RWPE1 (cell line): ENCODE measurements at regions of chr10 and their contacts with region 1.

Region 1: GRCh38 chr10:68261132-68261856 is 29.4 kb upstream of the ATOH7 start:
- DNase-seq: no peak
- H3K27ac ChIP-seq: no peak overlapping the region
- CTCF ChIP-seq: no peak

Region 2: DNA sequence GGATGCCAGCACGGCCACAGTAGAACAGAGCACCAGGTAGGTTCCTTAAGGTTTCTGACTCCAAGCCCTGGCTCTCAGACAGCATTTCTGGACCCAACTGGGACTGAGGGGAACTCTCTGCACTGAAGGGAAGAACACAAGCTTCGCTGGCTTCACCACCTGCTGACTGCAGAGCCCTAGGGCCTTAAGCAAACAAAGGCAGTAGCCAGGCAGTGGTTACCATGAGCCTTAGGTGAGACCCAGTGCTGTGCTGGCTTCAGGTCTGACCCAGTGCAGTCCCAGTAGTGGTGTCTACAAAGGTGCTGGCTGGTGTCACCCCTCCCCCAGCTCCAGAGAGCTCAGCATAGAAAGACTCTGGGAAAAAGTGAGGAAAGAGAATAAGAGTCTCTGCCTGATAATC is 317.4 kb before region 1 on chr10:
- CTCF ChIA-PET with region 1: no interaction called
- POLR2A ChIA-PET with region 1: interaction called, 10 read pairs
- DNase-seq: no peak
- H3K27ac ChIP-seq: no peak overlapping the region
- CTCF ChIP-seq: no peak

Region 3: GRCh38 chr10:68566955-68567354 is 305.7 kb after region 1 on chr10:
- CTCF ChIA-PET with region 1: no interaction called
- POLR2A ChIA-PET with region 1: no interaction called
- DNase-seq: no peak
- H3K27ac ChIP-seq: no peak overlapping the region
- CTCF ChIP-seq: no peak

Region 4: GRCh38 chr10:69222157-69223027 is 961.1 kb after region 1 on chr10:
- CTCF ChIA-PET with region 1: no interaction called
- POLR2A ChIA-PET with region 1: no interaction called
- DNase-seq: peak; percentile 97
- H3K27ac ChIP-seq: peak overlapping the region; percentile 94
- CTCF ChIP-seq: no peak; the same call in 1 of the 2 replicates